ENCODE measurements at regions of chr17 and their contacts with region 1.

Region 1: DNA sequence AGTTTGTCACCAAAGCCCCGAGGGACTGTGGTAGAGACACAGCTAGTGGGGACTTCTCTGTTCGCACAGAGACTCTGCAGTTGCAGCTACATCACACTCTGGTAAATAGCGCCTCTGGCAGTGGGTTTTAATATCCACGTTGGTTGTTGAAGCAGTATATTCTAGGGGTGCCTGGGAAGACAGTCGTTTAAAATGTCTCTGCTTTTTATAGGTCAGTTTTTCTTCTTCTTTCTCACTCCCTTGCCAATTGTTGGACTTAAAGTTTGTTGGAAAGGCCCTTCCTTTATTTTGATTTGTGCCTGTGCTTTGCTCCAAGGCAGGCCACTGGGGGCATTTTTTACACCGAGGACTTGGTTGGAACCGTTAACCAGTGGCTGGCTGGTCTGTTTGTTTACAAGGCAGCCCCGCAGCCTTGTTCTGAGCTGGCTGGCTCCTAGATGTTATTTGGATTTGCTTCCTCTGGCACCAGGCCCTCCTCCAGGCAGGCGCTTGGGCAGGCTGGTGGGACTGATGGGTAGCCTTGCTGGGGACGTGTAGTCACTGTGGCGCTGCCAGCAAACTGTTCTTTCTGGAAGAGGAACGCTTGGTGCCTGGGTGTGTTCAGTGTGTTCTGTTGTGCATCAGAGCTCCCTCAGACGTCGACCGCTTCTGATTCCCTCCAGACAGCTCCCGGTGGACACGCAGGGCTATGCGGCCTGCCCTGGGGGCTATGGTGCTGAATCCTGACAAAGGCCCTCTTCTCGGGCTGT is 218.2 kb upstream of the CHMP6 start:
- DNase-seq: no peak
- ATAC-seq: peak; percentile 62
- H3K4me3 Mint-ChIP-seq: no peak overlapping the region
- H3K27ac Mint-ChIP-seq: peak overlapping the region; percentile 2
- H3K4me1 Mint-ChIP-seq: peaks cover 33% of the 10 kb centered on the region
- H3K27me3 Mint-ChIP-seq: no peaks in the 10 kb centered on the region
- CTCF ChIP-seq: no peak

Region 2: GRCh38 chr17:80761110-80761871 is 12.1 kb before region 1 on chr17:
- CTCF ChIA-PET with region 1: no interaction called
- POLR2A ChIA-PET with region 1: interaction called, 9 read pairs
- intact Hi-C with region 1: loop called (anchors 1 kb)
- DNase-seq: no peak
- ATAC-seq: peak; percentile 18
- H3K4me3 Mint-ChIP-seq: peak overlapping the region; percentile 21
- H3K27ac Mint-ChIP-seq: peak overlapping the region; percentile 19
- H3K4me1 Mint-ChIP-seq: peaks cover 64% of the 10 kb centered on the region
- H3K27me3 Mint-ChIP-seq: no peaks in the 10 kb centered on the region
- CTCF ChIP-seq: no peak

Region 3: GRCh38 chr17:80791758-80792284 is 18.4 kb after region 1 on chr17:
- CTCF ChIA-PET with region 1: interaction called, 4 read pairs
- POLR2A ChIA-PET with region 1: interaction called, 6 read pairs
- intact Hi-C with region 1: loop called (anchors 1 kb)
- DNase-seq: no peak
- ATAC-seq: no peak
- H3K4me3 Mint-ChIP-seq: no peak overlapping the region
- H3K27ac Mint-ChIP-seq: no peak overlapping the region
- H3K4me1 Mint-ChIP-seq: peaks cover 23% of the 10 kb centered on the region
- H3K27me3 Mint-ChIP-seq: no peaks in the 10 kb centered on the region
- CTCF ChIP-seq: no peak

Measured in activated B cell treated with CpG ODN at 0.5 μM for 24 hours (primary cell).